ENCODE measurements at regions of chr7 and their contacts with region 1.

Region 1: GRCh38 chr7:24882989-24883621 is 96.9 kb downstream of the OSBPL3 start:
- DNase-seq: peak; percentile 67
- H3K4me3 ChIP-seq: no peak overlapping the region
- H3K27ac ChIP-seq: peak overlapping the region; percentile 23
- H3K4me1 ChIP-seq: peaks cover 47% of the 10 kb centered on the region
- H3K27me3 ChIP-seq: no peaks in the 10 kb centered on the region
- CTCF ChIP-seq: no peak
- POLR2A ChIP-seq: no peak

Region 2: GRCh38 chr7:24907311-24907886 is 24.3 kb after region 1 on chr7:
- CTCF ChIA-PET with region 1: interaction called, 4 read pairs
- POLR2A ChIA-PET with region 1: interaction called, 7 read pairs
- dilution Hi-C with region 1: no loop called
- intact Hi-C with region 1: loop called (anchors 1 kb)
- DNase-seq: peak; percentile 89
- H3K4me3 ChIP-seq: peak overlapping the region in 1 of 3 experiments; percentile 28
- H3K27ac ChIP-seq: peak overlapping the region; percentile 90
- H3K4me1 ChIP-seq: peaks cover 61% of the 10 kb centered on the region
- H3K27me3 ChIP-seq: no peaks in the 10 kb centered on the region
- CTCF ChIP-seq: no peak
- POLR2A ChIP-seq: no peak

Region 3: DNA sequence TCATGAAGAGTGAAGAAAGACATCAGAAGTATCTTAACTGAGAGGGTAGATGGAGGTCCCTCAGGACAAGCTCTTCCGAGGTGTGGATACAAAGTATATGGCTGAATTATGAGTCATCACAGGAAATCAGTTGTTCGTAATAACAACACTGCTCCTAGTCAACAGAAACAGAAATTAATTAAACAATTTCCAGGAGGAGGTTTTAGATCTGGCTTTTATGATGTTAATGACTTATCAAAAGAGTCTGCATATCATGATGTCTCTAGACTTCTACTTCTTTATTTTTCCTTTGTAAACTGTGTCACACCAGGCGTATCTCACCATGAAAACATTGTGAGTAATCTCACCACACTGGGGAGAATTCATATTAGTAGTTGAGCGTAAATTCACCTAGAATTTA is 65.6 kb after region 1 on chr7:
- CTCF ChIA-PET with region 1: interaction called, 4 read pairs
- POLR2A ChIA-PET with region 1: no interaction called
- dilution Hi-C with region 1: no loop called
- intact Hi-C with region 1: loop called (anchors 2 kb)
- DNase-seq: peak; percentile 40
- H3K4me3 ChIP-seq: no peak overlapping the region
- H3K27ac ChIP-seq: peak overlapping the region; percentile 21
- H3K4me1 ChIP-seq: peaks cover 12% of the 10 kb centered on the region
- H3K27me3 ChIP-seq: no peaks in the 10 kb centered on the region
- CTCF ChIP-seq: no peak
- POLR2A ChIP-seq: no peak

Region 4: DNA sequence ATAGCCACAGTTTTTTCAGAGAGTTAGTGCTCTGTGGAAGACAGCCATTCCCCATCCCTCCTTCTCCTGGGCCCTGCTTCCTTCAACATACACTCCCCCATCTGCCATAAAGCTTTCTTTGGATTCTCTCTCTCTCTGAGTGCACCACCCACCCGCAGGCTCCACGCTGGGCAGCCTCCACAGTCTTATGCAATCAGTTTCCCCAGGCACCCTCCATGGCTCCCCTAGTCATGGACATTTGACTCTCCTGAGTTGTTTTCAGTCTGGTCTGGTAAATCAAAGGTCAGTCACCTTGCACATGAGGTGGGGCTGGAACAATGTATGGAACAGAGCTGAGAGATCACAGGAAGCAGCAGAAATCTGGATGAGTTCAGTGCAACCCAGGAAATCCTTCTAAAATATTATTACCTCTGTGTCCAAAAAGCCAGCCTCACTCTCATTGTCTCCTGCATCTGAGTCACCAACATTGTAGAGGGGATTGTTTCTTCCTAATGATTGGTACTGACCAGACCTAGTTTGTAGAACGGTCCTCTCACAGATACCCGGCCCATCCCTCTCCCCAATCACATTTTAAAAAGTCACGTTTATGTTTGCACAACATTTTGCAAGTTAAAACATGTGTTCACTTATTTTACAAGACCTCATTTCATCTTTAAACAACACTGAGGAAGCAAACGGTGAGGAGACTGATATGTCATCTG is 171.9 kb after region 1 on chr7:
- CTCF ChIA-PET with region 1: no interaction called
- POLR2A ChIA-PET with region 1: no interaction called
- dilution Hi-C with region 1: no loop called
- intact Hi-C with region 1: no loop called
- DNase-seq: no peak
- H3K4me3 ChIP-seq: no peak overlapping the region
- H3K27ac ChIP-seq: no peak overlapping the region
- H3K4me1 ChIP-seq: no peaks in the 10 kb centered on the region
- H3K27me3 ChIP-seq: peaks cover 0 to 3% of the 10 kb centered on the region in 2 experiments
- CTCF ChIP-seq: no peak
- POLR2A ChIP-seq: no peak

Region 5: GRCh38 chr7:25427721-25428120 is 544.6 kb after region 1 on chr7:
- CTCF ChIA-PET with region 1: no interaction called
- POLR2A ChIA-PET with region 1: no interaction called
- dilution Hi-C with region 1: no loop called
- intact Hi-C with region 1: no loop called
- DNase-seq: no peak
- H3K4me3 ChIP-seq: no peak overlapping the region
- H3K27ac ChIP-seq: no peak overlapping the region
- H3K4me1 ChIP-seq: no peaks in the 10 kb centered on the region
- H3K27me3 ChIP-seq: no peaks in the 10 kb centered on the region
- CTCF ChIP-seq: no peak
- POLR2A ChIP-seq: no peak

Measured in endothelial cell of umbilical vein (primary cell).